Activated CD8-positive, alpha-beta T cell treated with anti-CD3 and anti-CD28 coated beads for 36 hours (primary cell): ENCODE measurements at regions of chr17 and their contacts with region 1.

Region 1: GRCh38 chr17:41695954-41696756 is 7.5 kb downstream of the EIF1 start:
- DNase-seq: peak; percentile 75
- ATAC-seq: peak; percentile 70
- H3K4me3 Mint-ChIP-seq: no peak overlapping the region
- H3K27ac Mint-ChIP-seq: peak overlapping the region; percentile 66
- H3K4me1 Mint-ChIP-seq: peaks cover 24% of the 10 kb centered on the region
- H3K27me3 Mint-ChIP-seq: no peaks in the 10 kb centered on the region
- CTCF ChIP-seq: peak; percentile 70

Region 2: DNA sequence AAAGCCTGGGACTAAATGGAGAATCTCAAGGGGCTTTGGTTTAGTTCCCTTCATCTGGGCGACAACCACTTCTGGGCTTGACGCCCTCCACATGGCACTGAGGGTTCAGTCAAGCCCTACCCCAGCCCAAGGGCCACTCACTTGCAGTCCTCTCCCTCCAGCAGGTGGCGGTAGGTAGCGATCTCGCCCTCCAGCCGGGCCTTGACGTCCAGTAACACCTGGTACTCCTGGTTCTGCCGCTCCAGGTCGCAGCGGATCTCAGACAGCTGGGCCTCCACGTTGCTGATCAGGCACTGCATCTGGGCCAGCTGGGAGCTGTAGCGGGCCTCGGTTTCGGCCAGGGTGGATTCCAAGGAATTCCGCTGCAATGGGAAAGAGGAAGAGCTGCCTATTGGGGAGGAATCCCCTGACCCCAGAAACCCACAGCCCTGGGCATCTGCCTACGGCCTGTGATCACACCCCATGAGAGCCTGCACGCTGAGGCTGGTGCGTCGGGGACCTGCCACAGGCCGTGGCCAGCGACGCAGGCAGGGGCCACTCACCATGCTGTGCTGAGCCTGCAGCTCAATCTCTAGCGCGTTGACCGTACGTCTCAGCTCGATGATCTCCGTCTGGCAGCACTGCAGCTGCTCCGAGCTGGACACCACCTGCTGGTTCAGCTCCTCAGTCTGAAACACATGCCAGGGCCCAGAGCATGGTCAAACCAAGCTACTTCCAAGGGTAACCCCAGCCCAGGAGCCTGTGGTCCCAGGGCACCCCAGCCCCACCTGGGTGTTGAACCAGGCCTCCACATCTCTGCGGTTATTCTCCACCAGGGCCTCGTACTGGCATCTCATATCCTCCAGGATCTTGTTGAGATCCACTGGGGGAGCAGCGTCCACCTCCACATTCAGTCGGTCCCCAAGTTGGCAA is 209.1 kb before region 1 on chr17:
- CTCF ChIA-PET with region 1: no interaction called
- POLR2A ChIA-PET with region 1: no interaction called
- intact Hi-C with region 1: no loop called
- DNase-seq: peak; percentile 61
- ATAC-seq: no peak
- H3K4me3 Mint-ChIP-seq: no peak overlapping the region
- H3K27ac Mint-ChIP-seq: no peak overlapping the region
- H3K4me1 Mint-ChIP-seq: peaks cover 2% of the 10 kb centered on the region
- H3K27me3 Mint-ChIP-seq: peaks cover 2% of the 10 kb centered on the region
- CTCF ChIP-seq: peak; percentile 56

Region 3: DNA sequence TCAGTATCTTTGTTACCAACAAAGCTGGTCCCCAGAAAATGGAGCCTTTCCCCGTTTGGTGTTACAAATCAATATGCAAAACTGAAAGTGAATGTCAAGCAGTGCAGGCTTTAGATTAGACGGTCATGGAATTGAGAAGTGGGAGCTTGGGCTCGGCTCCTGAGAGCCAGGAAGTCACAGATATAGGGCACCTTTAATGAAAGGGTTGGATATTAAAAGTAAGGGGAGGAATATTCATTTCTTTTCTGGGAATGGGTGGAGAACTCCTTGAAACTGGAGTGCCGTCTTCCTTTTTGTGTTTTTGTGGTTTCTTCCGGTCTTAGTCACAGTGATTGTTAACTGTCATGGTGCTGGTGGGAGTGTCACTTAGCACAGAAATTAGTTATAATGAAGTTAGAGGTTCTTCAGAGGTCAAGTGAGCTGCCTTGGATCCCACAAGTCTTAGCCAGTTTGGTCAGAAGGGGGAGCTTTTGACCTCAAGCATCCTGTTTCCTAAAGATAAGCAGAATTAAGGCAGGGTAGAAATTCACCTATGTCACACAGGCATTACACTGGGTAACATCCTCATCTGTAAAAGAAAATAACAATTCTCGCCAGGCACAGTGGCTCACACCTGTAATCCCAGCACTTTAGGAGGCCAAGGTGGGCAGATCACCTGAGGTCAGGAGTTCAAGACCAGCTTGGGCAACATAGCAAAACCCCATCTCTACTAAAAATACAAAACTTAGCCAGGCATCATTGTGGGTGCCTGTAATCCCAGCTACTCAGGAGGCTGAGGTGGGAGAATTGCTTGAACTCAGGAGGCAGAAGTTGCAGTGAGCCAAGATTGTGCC is 17.0 kb before region 1 on chr17:
- CTCF ChIA-PET with region 1: interaction called, 85 read pairs
- POLR2A ChIA-PET with region 1: interaction called, 182 read pairs
- intact Hi-C with region 1: no loop called
- DNase-seq: peak; percentile 87
- ATAC-seq: peak; percentile 88
- H3K4me3 Mint-ChIP-seq: peak overlapping the region; percentile 88
- H3K27ac Mint-ChIP-seq: peak overlapping the region; percentile 97
- H3K4me1 Mint-ChIP-seq: peaks cover 48% of the 10 kb centered on the region
- H3K27me3 Mint-ChIP-seq: no peaks in the 10 kb centered on the region
- CTCF ChIP-seq: no peak

Region 4: GRCh38 chr17:41710468-41711090 is 14.4 kb after region 1 on chr17:
- CTCF ChIA-PET with region 1: interaction called, 24 read pairs
- POLR2A ChIA-PET with region 1: interaction called, 88 read pairs
- intact Hi-C with region 1: no loop called
- DNase-seq: peak; percentile 65
- ATAC-seq: peak; percentile 67
- H3K4me3 Mint-ChIP-seq: no peak overlapping the region
- H3K27ac Mint-ChIP-seq: no peak overlapping the region
- H3K4me1 Mint-ChIP-seq: peaks cover 5% of the 10 kb centered on the region
- H3K27me3 Mint-ChIP-seq: peaks cover 5% of the 10 kb centered on the region
- CTCF ChIP-seq: no peak

Region 5: DNA sequence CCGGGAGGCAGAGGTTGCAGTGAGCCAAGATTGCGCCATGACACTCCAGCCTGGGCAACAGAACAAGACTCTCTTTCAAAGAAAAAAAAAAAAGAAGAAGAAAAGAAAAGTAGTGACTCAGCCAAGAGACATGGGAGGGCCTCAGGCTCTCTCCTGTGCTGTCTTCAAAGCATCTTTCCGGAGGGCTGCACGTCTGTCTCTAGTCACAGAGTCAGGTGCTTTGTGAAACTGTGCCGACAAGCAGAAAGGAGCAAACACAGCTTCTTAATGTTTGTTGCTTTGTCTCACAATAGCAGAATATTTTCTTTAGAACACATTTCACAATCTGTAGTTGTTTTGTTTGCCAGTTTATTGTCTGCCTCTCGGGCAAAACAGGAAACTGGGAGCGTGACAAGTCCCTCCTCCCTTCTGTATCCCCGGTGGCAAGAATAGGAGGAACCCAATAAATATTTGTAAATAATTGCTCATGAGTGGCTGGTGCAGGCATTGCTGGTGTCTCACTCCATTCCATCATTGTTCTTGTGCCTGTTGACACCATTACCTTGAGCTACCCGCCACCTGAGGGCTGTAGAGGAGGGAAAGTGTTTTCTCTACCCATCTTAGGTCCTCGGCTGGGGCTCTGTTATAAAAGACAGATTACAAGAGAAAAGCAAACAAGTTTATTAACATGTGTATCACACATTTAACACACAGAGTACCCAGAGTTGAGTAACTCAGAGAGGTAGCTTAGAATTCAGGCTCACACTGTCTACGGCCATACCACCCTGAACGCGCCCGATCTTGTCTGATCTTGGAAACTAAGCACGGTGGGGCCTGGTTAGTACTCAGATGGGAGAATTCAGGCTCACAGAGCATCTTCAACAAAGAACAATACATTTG is 21.5 kb after region 1 on chr17:
- CTCF ChIA-PET with region 1: interaction called, 12 read pairs
- POLR2A ChIA-PET with region 1: interaction called, 6 read pairs
- intact Hi-C with region 1: no loop called
- DNase-seq: peak; percentile 33
- ATAC-seq: peak; percentile 84
- H3K4me3 Mint-ChIP-seq: no peak overlapping the region
- H3K27ac Mint-ChIP-seq: no peak overlapping the region
- H3K4me1 Mint-ChIP-seq: peaks cover 8% of the 10 kb centered on the region
- H3K27me3 Mint-ChIP-seq: peaks cover 5% of the 10 kb centered on the region
- CTCF ChIP-seq: no peak